Ovary (tissue), 10 donors: ENCODE measurements at regions of chr19 and their contacts with region 1.

Region 1: GRCh38 chr19:1929021-1929742 is 11.8 kb upstream of the CSNK1G2 start:
- DNase-seq: peak; percentile 63 to 85 (median 79)
- H3K4me3 ChIP-seq: peak overlapping the region; percentile 12
- H3K27ac ChIP-seq: no peak overlapping the region
- H3K4me1 ChIP-seq: peaks cover 11% of the 10 kb centered on the region
- H3K27me3 ChIP-seq: no peaks in the 10 kb centered on the region
- CTCF ChIP-seq: peak; percentile 78 to 85 (median 83)
- EP300 ChIP-seq: no peak
- POLR2A ChIP-seq: no peak

Region 2: DNA sequence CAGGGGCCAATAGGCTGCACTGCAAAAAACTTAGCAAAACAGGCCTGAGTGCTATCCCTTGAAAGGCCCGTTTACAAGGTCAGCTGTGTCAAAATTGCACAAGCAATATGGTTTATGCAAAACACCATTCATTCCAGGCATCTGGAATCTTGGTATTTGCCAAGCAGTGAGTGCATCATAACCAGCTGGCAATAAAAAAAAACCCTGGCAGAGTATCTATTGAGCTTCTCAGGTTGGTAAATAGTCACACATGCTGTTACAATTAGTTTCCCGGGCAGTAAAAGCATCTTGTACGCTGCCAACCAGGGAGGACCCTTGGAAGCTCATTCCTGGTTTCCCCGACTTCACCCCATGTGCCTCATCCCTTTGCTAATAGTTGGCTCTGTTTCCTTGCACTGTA is 994.3 kb after region 1 on chr19:
- intact Hi-C with region 1: loop called in 1 of 4 experiments (anchors 5 kb)
- DNase-seq: no peak
- H3K4me3 ChIP-seq: no peak overlapping the region
- H3K27ac ChIP-seq: no peak overlapping the region
- H3K4me1 ChIP-seq: peaks cover 3% of the 10 kb centered on the region
- H3K27me3 ChIP-seq: no peaks in the 10 kb centered on the region
- CTCF ChIP-seq: no peak
- EP300 ChIP-seq: no peak
- POLR2A ChIP-seq: no peak